ENCODE measurements at regions of chr20 and their contacts with region 1.

Region 1: GRCh38 chr20:53578492-53579222 is 15.0 kb downstream of the ZNF217 start:
- DNase-seq: peak; percentile 45 to 82
- H3K4me3 ChIP-seq: no peak overlapping the region
- H3K27ac ChIP-seq: peak overlapping the region; percentile 77 to 83
- H3K4me1 ChIP-seq: peaks cover 12 to 14% of the 10 kb centered on the region in 2 donors
- H3K27me3 ChIP-seq: no peaks in the 10 kb centered on the region
- CTCF ChIP-seq: peak; percentile 83 to 98 (median 92)
- POLR2A ChIP-seq: no peak

Region 2: GRCh38 chr20:53364646-53365045 is 214.0 kb before region 1 on chr20:
- intact Hi-C with region 1: no loop called
- DNase-seq: no peak
- H3K4me3 ChIP-seq: no peak overlapping the region
- H3K27ac ChIP-seq: no peak overlapping the region
- H3K4me1 ChIP-seq: no peaks in the 10 kb centered on the region
- H3K27me3 ChIP-seq: no peaks in the 10 kb centered on the region
- CTCF ChIP-seq: no peak
- POLR2A ChIP-seq: no peak

Region 3: GRCh38 chr20:53635221-53635924 is 56.7 kb after region 1 on chr20:
- intact Hi-C with region 1: no loop called
- DNase-seq: no peak
- H3K4me3 ChIP-seq: no peak overlapping the region
- H3K27ac ChIP-seq: no peak overlapping the region
- H3K4me1 ChIP-seq: no peaks in the 10 kb centered on the region
- H3K27me3 ChIP-seq: no peaks in the 10 kb centered on the region
- CTCF ChIP-seq: no peak
- POLR2A ChIP-seq: no peak

Region 4: GRCh38 chr20:53922901-53923314 is 344.3 kb after region 1 on chr20:
- intact Hi-C with region 1: loop called (anchors 5 kb)
- DNase-seq: no peak
- H3K4me3 ChIP-seq: no peak overlapping the region
- H3K27ac ChIP-seq: peak overlapping the region; percentile 42 to 65
- H3K4me1 ChIP-seq: peaks cover 0 to 11% of the 10 kb centered on the region in 2 donors
- H3K27me3 ChIP-seq: no peaks in the 10 kb centered on the region
- CTCF ChIP-seq: no peak
- POLR2A ChIP-seq: no peak

Region 5: GRCh38 chr20:53939572-53940359 is 361.1 kb after region 1 on chr20:
- intact Hi-C with region 1: loop called (anchors 10 kb)
- DNase-seq: peak; percentile 84 to 92
- H3K4me3 ChIP-seq: no peak overlapping the region
- H3K27ac ChIP-seq: peak overlapping the region; percentile 45 to 71
- H3K4me1 ChIP-seq: peaks cover 0 to 6% of the 10 kb centered on the region in 2 donors
- H3K27me3 ChIP-seq: no peaks in the 10 kb centered on the region
- CTCF ChIP-seq: peak; percentile 61 to 83 (median 74)
- POLR2A ChIP-seq: no peak

Region 6: GRCh38 chr20:54199721-54200176 is 621.1 kb after region 1 on chr20:
- intact Hi-C with region 1: loop called (anchors 5 kb)
- DNase-seq: peak; percentile 67 to 70
- H3K4me3 ChIP-seq: no peak overlapping the region
- H3K27ac ChIP-seq: no peak overlapping the region
- H3K4me1 ChIP-seq: no peaks in the 10 kb centered on the region
- H3K27me3 ChIP-seq: no peaks in the 10 kb centered on the region
- CTCF ChIP-seq: peak; percentile 73 to 90 (median 86)
- POLR2A ChIP-seq: no peak

Measured in uterus (tissue), 4 donors.